K562 (cell line): ENCODE measurements at regions of chr9 and their contacts with region 1.

Region 1: GRCh38 chr9:74773886-74774479 is 113.7 kb downstream of the TRPM6 start:
- DNase-seq: peak; percentile 41 to 76 (median 45)
- ATAC-seq: peak; percentile 76
- H3K4me3 ChIP-seq: no peak overlapping the region
- H3K27ac ChIP-seq: no peak overlapping the region
- H3K4me1 ChIP-seq: peaks cover 0 to 3% of the 10 kb centered on the region in 2 experiments; a peak in 1 of 5 replicates
- H3K27me3 ChIP-seq: no peaks in the 10 kb centered on the region
- CTCF ChIP-seq: peak; percentile 68 to 78 (median 69)
- EP300 ChIP-seq: no peak
- POLR2A ChIP-seq: no peak
- RAD21 ChIP-seq: peak; percentile 69 to 71

Region 2: GRCh38 chr9:74920944-74921626 is 147.1 kb after region 1 on chr9:
- CTCF ChIA-PET with region 1: no interaction called
- POLR2A ChIA-PET with region 1: no interaction called
- in situ Hi-C with region 1: no loop called
- intact Hi-C with region 1: loop called (anchors 5 kb)
- DNase-seq: no peak
- ATAC-seq: no peak
- H3K4me3 ChIP-seq: no peak overlapping the region
- H3K27ac ChIP-seq: no peak overlapping the region
- H3K4me1 ChIP-seq: no peaks in the 10 kb centered on the region
- H3K27me3 ChIP-seq: no peaks in the 10 kb centered on the region
- CTCF ChIP-seq: no peak
- EP300 ChIP-seq: no peak
- POLR2A ChIP-seq: no peak
- RAD21 ChIP-seq: no peak

Region 3: GRCh38 chr9:75001719-75002422 is 227.9 kb after region 1 on chr9:
- CTCF ChIA-PET with region 1: interaction called, 19 read pairs
- POLR2A ChIA-PET with region 1: no interaction called
- in situ Hi-C with region 1: loop called (anchors 5 kb)
- intact Hi-C with region 1: loop called (anchors 1 kb)
- DNase-seq: peak; percentile 28 to 80 (median 28)
- ATAC-seq: peak; percentile 96
- H3K4me3 ChIP-seq: no peak overlapping the region
- H3K27ac ChIP-seq: no peak overlapping the region; the same call in 2 of the 3 replicates
- H3K4me1 ChIP-seq: no peaks in the 10 kb centered on the region
- H3K27me3 ChIP-seq: no peaks in the 10 kb centered on the region
- CTCF ChIP-seq: peak; percentile 45 to 68 (median 52); a peak in 4 of 6 replicates
- EP300 ChIP-seq: no peak
- POLR2A ChIP-seq: no peak
- RAD21 ChIP-seq: peak; percentile 69 to 80

Region 4: DNA sequence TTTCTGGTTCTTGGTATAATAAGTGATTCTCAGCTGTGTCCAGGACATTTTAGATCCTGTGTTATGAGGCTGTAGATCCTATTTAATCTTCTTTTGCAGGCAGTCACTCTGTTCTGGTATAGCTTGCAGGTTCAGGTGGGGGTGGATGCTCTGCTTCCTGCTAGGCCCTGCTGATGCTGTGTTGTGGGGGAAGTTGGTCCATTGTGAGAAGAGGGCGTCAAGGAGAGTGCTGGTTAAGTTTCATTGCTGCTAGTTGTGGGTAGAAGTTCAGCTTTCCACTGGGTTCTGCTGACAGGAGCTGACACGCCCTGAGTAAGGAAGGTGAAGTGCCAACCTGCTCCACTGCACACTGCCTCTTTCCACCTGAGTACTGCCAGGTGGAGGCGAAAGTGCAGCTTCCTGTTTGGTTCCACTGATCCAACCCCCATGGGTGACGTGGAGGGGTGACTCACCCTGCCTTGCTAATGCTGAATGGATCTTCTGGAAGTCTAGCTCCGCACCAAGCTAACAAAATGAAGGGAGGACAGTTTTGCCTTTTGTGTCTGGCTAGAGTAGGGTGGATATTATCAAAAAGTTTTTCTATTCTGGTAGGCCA is 297.6 kb after region 1 on chr9:
- CTCF ChIA-PET with region 1: interaction called, 20 read pairs
- POLR2A ChIA-PET with region 1: no interaction called
- in situ Hi-C with region 1: loop called (anchors 5 kb)
- intact Hi-C with region 1: no loop called
- DNase-seq: peak in 3 of 4 experiments; percentile 8 to 51 (median 34)
- ATAC-seq: peak; percentile 80
- H3K4me3 ChIP-seq: no peak overlapping the region
- H3K27ac ChIP-seq: no peak overlapping the region; the same call in 2 of the 3 replicates
- H3K4me1 ChIP-seq: peaks cover 0 to 2% of the 10 kb centered on the region in 2 experiments; a peak in 3 of 5 replicates
- H3K27me3 ChIP-seq: no peaks in the 10 kb centered on the region
- CTCF ChIP-seq: no peak
- EP300 ChIP-seq: no peak
- POLR2A ChIP-seq: no peak
- RAD21 ChIP-seq: no peak

Region 5: GRCh38 chr9:75185585-75186170 is 411.7 kb after region 1 on chr9:
- CTCF ChIA-PET with region 1: interaction called, 4 read pairs
- POLR2A ChIA-PET with region 1: no interaction called
- in situ Hi-C with region 1: loop called (anchors 25 kb)
- intact Hi-C with region 1: loop called (anchors 5 kb)
- DNase-seq: peak; percentile 12 to 56 (median 16)
- ATAC-seq: peak; percentile 90
- H3K4me3 ChIP-seq: no peak overlapping the region
- H3K27ac ChIP-seq: no peak overlapping the region
- H3K4me1 ChIP-seq: no peaks in the 10 kb centered on the region; a peak in 1 of 5 replicates
- H3K27me3 ChIP-seq: no peaks in the 10 kb centered on the region
- CTCF ChIP-seq: peak; percentile 61 to 66 (median 64)
- EP300 ChIP-seq: no peak
- POLR2A ChIP-seq: no peak
- RAD21 ChIP-seq: peak in 1 of 2 experiments; percentile 19; a peak in 1 of 4 replicates

Region 6: GRCh38 chr9:75238311-75238978 is 464.5 kb after region 1 on chr9:
- CTCF ChIA-PET with region 1: interaction called, 4 read pairs
- POLR2A ChIA-PET with region 1: no interaction called
- in situ Hi-C with region 1: no loop called
- intact Hi-C with region 1: loop called (anchors 5 kb)
- DNase-seq: peak; percentile 17 to 43 (median 23)
- ATAC-seq: peak; percentile 96
- H3K4me3 ChIP-seq: no peak overlapping the region
- H3K27ac ChIP-seq: no peak overlapping the region
- H3K4me1 ChIP-seq: no peaks in the 10 kb centered on the region
- H3K27me3 ChIP-seq: no peaks in the 10 kb centered on the region
- CTCF ChIP-seq: peak; percentile 31 to 63 (median 51); a peak in 5 of 6 replicates
- EP300 ChIP-seq: no peak
- POLR2A ChIP-seq: no peak
- RAD21 ChIP-seq: peak; percentile 36 to 61

Region 7: DNA sequence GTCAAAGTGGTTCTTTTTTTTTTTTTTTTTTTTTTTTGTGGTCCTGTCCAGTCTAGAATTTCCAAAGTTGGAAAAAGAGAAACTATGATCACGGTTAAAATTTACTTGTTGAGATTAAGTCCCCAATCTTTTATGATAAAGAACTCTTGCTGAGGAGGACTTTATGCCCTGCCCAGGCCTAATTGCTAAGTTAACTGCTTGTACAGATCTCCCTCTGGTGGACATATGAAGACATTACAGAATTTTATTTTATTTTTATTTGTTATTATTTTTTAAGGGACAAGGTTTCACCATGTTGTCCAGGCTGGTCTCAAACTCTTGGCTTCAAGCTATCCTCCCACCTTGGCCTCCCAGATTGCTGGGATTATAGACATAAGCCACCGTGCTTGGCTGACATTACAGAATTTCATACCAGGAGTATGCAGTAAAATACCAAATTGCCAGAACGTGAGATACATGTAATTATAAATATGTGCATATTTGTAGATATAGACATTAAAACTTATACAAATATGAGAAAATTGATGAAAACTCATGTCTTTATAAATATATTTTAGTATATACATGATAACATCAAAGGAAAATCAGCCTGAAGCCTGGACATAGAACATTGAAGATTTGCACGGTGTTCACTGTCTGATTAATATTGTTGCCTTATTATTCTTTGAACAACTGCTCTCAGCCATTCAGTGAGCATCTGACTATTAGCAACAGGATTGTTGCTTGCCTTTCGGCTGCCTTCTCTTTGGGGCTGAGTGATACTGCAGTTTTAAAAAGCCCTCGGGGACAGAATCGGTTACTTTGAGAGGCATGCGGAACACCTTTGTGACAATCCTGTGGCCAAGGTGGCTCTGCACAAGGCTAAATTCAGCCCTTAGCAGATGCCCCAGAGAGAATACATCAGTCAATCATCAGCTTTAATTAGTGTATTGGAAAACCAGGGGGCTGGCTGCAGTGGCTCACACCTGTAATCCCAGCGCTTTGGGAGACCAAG is 1529.3 kb after region 1 on chr9:
- CTCF ChIA-PET with region 1: no interaction called
- POLR2A ChIA-PET with region 1: no interaction called
- in situ Hi-C with region 1: loop called (anchors 25 kb)
- intact Hi-C with region 1: loop called (anchors 10 kb)
- DNase-seq: peak; percentile 34 to 42 (median 40)
- ATAC-seq: peak; percentile 67
- H3K4me3 ChIP-seq: no peak overlapping the region
- H3K27ac ChIP-seq: no peak overlapping the region
- H3K4me1 ChIP-seq: no peaks in the 10 kb centered on the region
- H3K27me3 ChIP-seq: peaks cover 0 to 5% of the 10 kb centered on the region in 2 experiments; a peak in 2 of 5 replicates
- CTCF ChIP-seq: peak; percentile 29 to 70 (median 34); a peak in 4 of 6 replicates
- EP300 ChIP-seq: no peak
- POLR2A ChIP-seq: no peak
- RAD21 ChIP-seq: peak; percentile 64 to 73